ENCODE measurements at regions of chr9 and their contacts with region 1.

Region 1: GRCh38 chr9:15277400-15278090 is 29.5 kb downstream of the TTC39B start:
- DNase-seq: peak in 5 of 9 donors; percentile 27 to 53 (median 35)
- ATAC-seq: peak; percentile 48
- H3K4me3 ChIP-seq: no peak overlapping the region
- H3K4me3 Mint-ChIP-seq: peak overlapping the region in 1 of 10 donors; percentile 13
- H3K27ac ChIP-seq: no peak overlapping the region
- H3K27ac Mint-ChIP-seq: peak overlapping the region in 5 of 9 donors; percentile 2 to 73 (median 31)
- H3K4me1 ChIP-seq: peaks cover 0 to 4% of the 10 kb centered on the region in 2 donors
- H3K4me1 Mint-ChIP-seq: peaks cover 18 to 85% (median 48%) of the 10 kb centered on the region in 7 donors
- H3K27me3 ChIP-seq: no peaks in the 10 kb centered on the region
- H3K27me3 Mint-ChIP-seq: no peaks in the 10 kb centered on the region

Region 2: GRCh38 chr9:15295761-15296405 is 18.3 kb after region 1 on chr9:
- CTCF ChIA-PET with region 1: interaction called, 6 read pairs
- POLR2A ChIA-PET with region 1: interaction called, 5 read pairs
- intact Hi-C with region 1: loop called in 1 of 2 experiments (anchors 2 kb)
- DNase-seq: peak in 7 of 9 donors; percentile 37 to 72 (median 53)
- ATAC-seq: peak; percentile 59
- H3K4me3 ChIP-seq: peak overlapping the region; percentile 41
- H3K4me3 Mint-ChIP-seq: peak overlapping the region; percentile 70 to 98 (median 84)
- H3K27ac ChIP-seq: peak overlapping the region; percentile 88
- H3K27ac Mint-ChIP-seq: peak overlapping the region; percentile 96 to 99 (median 98)
- H3K4me1 ChIP-seq: peaks cover 71 to 82% of the 10 kb centered on the region in 2 donors
- H3K4me1 Mint-ChIP-seq: peaks cover 61 to 93% (median 88%) of the 10 kb centered on the region in 7 donors
- H3K27me3 ChIP-seq: no peaks in the 10 kb centered on the region
- H3K27me3 Mint-ChIP-seq: no peaks in the 10 kb centered on the region

Region 3: DNA sequence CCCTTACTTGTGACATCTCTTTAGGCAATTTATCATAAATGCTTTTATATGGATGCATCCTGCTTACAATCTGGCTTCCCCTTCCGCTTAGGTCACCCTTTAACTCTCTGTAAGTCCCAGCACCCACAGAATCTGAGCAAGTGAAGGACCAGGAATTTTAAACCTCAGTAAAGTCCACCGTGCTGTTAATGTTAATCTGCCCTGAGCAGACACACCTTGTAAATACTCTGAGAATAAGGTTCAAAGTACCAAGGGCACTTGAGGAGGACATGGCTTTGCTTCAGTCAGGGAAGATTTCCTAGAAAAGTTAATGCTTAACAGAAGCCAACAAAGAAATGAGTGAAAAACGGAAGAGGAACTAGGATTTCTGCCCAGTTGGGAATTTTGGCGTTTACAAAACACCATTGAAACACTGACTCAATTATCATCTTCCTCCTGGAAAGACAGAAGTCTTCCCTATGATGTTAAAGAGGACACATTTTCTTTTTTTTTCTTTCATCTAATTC is 55.9 kb after region 1 on chr9:
- CTCF ChIA-PET with region 1: interaction called, 3 read pairs
- POLR2A ChIA-PET with region 1: no interaction called
- intact Hi-C with region 1: loop called in 1 of 2 experiments (anchors 1 kb)
- DNase-seq: no peak
- ATAC-seq: no peak
- H3K4me3 ChIP-seq: no peak overlapping the region
- H3K4me3 Mint-ChIP-seq: no peak overlapping the region
- H3K27ac ChIP-seq: no peak overlapping the region
- H3K27ac Mint-ChIP-seq: no peak overlapping the region
- H3K4me1 ChIP-seq: no peaks in the 10 kb centered on the region
- H3K4me1 Mint-ChIP-seq: peaks cover 0 to 7% (median 4%) of the 10 kb centered on the region in 7 donors
- H3K27me3 ChIP-seq: no peaks in the 10 kb centered on the region
- H3K27me3 Mint-ChIP-seq: peaks cover 0 to 25% (median 0%) of the 10 kb centered on the region in 5 donors

Region 4: DNA sequence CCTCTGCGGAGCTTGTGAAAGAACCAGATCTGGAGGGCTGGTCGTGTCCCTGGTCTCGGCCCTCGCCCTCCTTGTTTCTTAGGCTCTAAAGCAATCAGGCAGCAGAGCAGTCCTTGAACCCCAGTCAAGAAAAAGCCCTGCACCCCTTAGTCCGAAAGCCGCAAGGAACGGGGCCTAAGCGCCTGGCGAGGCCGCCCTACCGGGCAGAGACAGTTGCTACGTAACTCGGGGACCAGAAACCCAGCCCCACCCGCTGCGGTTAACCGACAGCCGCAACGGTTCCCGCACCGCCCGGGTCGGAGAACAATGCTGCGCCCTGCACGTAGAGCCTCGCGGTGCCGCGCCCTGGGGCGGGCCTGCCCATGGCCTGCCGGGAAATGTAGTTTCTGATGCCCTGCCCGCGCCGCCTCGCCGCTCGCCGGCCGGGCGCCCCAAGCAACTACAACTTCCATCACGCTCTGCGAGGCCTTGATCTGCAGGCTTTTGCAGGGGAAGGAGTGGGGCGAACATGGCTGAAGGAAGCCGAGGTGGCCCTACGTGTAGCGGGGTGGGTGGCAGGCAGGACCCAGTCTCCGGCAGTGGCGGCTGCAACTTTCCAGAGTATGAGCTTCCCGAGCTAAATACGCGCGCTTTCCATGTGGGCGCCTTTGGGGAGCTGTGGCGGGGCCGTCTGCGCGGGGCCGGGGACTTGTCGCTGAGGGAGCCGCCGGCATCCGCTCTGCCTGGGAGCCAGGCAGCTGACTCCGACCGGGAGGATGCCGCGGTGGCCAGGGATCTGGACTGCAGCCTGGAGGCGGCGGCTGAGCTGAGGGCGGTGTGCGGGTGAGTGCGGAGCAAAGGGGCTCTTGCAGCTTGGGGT is 145.1 kb after region 1 on chr9 and contains the start of gene SNAPC3:
- CTCF ChIA-PET with region 1: no interaction called
- POLR2A ChIA-PET with region 1: no interaction called
- intact Hi-C with region 1: loop called (anchors 1 kb)
- DNase-seq: peak; percentile 86 to 96 (median 93)
- ATAC-seq: peak; percentile 99
- H3K4me3 ChIP-seq: peak within 1 kb of the TSS; percentile 90
- H3K4me3 Mint-ChIP-seq: peak within 1 kb of the TSS; percentile 89 to 95 (median 92)
- H3K27ac ChIP-seq: peak within 1 kb of the TSS; percentile 74
- H3K27ac Mint-ChIP-seq: peak within 1 kb of the TSS; percentile 89 to 96 (median 93)
- H3K4me1 ChIP-seq: peaks cover 0 to 8% of the 10 kb centered on the region in 2 donors
- H3K4me1 Mint-ChIP-seq: peaks cover 20 to 47% (median 45%) of the 10 kb centered on the region in 7 donors
- H3K27me3 ChIP-seq: no peaks in the 10 kb centered on the region
- H3K27me3 Mint-ChIP-seq: no peaks in the 10 kb centered on the region
- total RNA-seq, gene SNAPC3: 11.9 to 44.4 (median 33.5) TPM

Region 5: DNA sequence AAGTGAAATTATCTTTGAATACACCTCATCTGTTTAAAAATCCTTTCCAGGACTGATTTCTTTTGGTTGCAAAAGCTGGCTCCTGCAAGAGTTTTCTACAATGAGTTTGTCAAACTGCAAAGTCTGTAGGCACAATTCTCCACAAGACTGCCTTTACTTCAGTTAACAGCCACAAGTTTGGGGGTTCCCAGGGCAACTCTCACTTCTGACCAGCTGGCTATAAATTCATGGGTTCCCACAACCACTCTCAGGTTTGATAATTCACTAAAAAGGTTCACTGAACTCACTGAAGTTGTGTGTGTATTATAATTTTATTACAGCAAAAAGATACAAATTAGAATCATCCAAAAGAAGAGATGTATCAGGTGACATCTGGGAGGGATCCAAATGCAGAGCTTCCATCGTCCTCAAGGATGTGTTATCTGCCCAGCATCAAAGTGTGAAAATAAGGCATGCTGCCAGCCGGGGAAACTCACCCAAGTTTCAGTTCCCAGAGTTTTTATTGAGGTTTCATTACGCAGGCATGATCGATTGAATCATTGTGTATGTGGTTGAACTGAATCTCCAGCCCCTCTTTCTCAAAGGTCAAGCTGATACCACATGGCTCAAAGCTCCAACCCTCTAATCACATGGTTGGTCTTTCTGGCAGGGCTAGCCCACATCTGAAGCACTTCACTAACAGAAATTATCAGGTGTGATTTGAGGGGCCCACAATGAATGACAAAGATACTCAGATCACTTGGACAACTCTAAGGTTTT is 252.2 kb after region 1 on chr9:
- CTCF ChIA-PET with region 1: no interaction called
- POLR2A ChIA-PET with region 1: no interaction called
- intact Hi-C with region 1: loop called in 1 of 2 experiments (anchors 1 kb)
- DNase-seq: no peak
- ATAC-seq: no peak
- H3K4me3 ChIP-seq: no peak overlapping the region
- H3K4me3 Mint-ChIP-seq: no peak overlapping the region
- H3K27ac ChIP-seq: no peak overlapping the region
- H3K27ac Mint-ChIP-seq: no peak overlapping the region
- H3K4me1 ChIP-seq: no peaks in the 10 kb centered on the region
- H3K4me1 Mint-ChIP-seq: peaks cover 0 to 18% (median 7%) of the 10 kb centered on the region in 7 donors
- H3K27me3 ChIP-seq: no peaks in the 10 kb centered on the region
- H3K27me3 Mint-ChIP-seq: peaks cover 0 to 7% (median 0%) of the 10 kb centered on the region in 5 donors

Region 6: DNA sequence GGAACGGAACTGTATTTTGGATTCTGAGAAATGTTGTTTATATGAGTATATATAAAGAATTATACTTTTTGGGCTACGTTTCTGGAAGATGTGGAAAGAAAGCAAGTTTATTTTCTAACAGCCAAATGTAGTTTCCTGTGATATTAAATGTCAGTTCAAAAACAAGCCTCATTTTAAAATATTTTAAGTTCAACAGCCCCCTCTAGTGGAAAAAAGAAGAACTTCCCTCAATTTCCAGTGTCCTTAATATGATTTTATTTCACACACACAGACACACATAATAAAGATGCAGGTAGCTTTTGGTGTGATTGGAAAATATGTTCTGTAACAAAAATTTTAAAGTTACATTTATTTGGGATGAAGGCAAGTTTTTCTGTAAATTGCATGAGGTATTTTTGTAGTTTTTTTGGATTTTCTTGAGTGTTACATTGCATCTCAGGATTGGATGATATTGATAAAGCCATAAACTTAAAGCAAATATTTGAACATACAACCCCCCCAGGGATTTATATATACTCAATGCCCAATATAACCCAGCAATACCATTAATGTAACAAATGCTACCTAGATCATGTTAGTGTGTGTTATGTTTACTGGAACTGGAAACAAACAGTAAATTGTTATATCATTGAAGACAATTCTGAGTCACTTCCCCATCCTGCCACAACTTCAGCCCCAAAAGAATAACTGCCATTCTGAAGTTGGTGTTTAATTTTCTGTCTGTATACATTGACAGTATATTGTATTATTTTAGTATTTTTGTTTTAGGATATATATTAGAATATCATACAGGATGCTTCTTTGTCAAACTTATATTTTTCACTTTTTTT is 329.3 kb after region 1 on chr9:
- CTCF ChIA-PET with region 1: interaction called, 4 read pairs
- POLR2A ChIA-PET with region 1: no interaction called
- intact Hi-C with region 1: loop called in 1 of 2 experiments (anchors 1 kb)
- DNase-seq: peak in 7 of 9 donors; percentile 29 to 71 (median 60)
- ATAC-seq: peak; percentile 55
- H3K4me3 ChIP-seq: no peak overlapping the region
- H3K4me3 Mint-ChIP-seq: no peak overlapping the region
- H3K27ac ChIP-seq: no peak overlapping the region
- H3K27ac Mint-ChIP-seq: no peak overlapping the region
- H3K4me1 ChIP-seq: no peaks in the 10 kb centered on the region
- H3K4me1 Mint-ChIP-seq: peaks cover 0 to 7% (median 0%) of the 10 kb centered on the region in 7 donors
- H3K27me3 ChIP-seq: no peaks in the 10 kb centered on the region
- H3K27me3 Mint-ChIP-seq: no peaks in the 10 kb centered on the region